ENCODE measurements at regions of chr22 and their contacts with region 1.

Region 1: GRCh38 chr22:41411021-41411851 is 29.5 kb downstream of the TEF start:
- DNase-seq: no peak
- H3K4me3 ChIP-seq: no peak overlapping the region
- H3K27ac ChIP-seq: no peak overlapping the region
- H3K4me1 ChIP-seq: peaks cover 0 to 18% of the 10 kb centered on the region in 2 experiments; a peak in 1 of 4 replicates
- H3K27me3 ChIP-seq: no peaks in the 10 kb centered on the region
- CTCF ChIP-seq: no peak
- EP300 ChIP-seq: no peak
- RAD21 ChIP-seq: no peak

Region 2: DNA sequence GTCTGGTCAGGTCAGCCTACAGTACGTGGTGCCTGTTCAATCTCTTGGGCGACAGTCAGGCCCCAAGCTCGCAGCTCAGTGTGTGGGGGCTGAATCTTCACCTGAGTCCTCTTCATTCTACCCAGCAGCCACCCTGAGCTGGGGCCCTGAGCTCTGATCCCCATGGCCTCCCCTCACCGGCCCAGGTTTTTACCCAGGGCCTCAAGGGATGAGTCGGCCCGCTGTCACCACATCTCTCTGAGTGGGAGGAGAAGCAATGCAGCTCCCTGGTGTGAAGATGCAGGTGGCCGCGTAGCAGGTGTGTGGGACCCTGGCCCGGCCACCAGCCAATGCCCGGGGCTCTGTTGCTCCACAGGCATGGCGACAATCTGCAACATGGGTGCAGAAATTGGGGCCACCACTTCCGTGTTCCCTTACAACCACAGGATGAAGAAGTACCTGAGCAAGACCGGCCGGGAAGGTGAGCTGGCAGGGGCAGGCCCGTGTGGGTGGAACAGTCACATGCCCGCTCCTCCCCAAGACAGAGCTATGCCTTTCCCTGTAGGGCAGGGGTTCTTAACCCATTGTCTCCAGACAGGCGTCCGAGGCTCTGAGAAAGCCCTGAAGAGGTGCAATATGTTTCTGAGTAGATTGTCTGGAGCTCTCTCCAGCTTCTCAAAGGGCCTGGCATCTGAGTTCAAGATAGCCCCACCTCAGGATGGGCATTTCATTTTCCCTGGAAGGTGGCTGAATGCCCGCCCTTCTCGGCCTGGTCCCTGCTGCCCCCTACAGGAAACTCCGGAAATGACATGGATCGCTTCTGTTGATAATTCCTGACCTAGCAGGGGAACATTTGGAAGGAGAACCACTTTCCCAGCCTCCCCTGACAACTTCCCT is 106.2 kb after region 1 on chr22:
- CTCF ChIA-PET with region 1: interaction called, 18 read pairs
- POLR2A ChIA-PET with region 1: no interaction called
- DNase-seq: peak; percentile 75
- H3K4me3 ChIP-seq: no peak overlapping the region; a peak in 1 of 4 replicates
- H3K27ac ChIP-seq: no peak overlapping the region
- H3K4me1 ChIP-seq: peaks cover 2 to 7% of the 10 kb centered on the region in 2 experiments; a peak in 2 of 4 replicates
- H3K27me3 ChIP-seq: no peaks in the 10 kb centered on the region
- CTCF ChIP-seq: peak; percentile 66
- EP300 ChIP-seq: no peak
- RAD21 ChIP-seq: peak; percentile 81